ENCODE measurements at regions of chr2 and their contacts with region 1.

Region 1: GRCh38 chr2:197705121-197705911 is at the start of gene MARS2:
- DNase-seq: peak; percentile 98
- H3K4me3 Mint-ChIP-seq: peak within 1 kb of the TSS; percentile 85
- H3K27ac Mint-ChIP-seq: peak within 1 kb of the TSS; percentile 96
- H3K4me1 Mint-ChIP-seq: peaks cover 38% of the 10 kb centered on the region
- H3K27me3 Mint-ChIP-seq: peaks cover 5% of the 10 kb centered on the region
- total RNA-seq, gene MARS2: 23.1 and 23.2 TPM in 2 replicates

Region 2: DNA sequence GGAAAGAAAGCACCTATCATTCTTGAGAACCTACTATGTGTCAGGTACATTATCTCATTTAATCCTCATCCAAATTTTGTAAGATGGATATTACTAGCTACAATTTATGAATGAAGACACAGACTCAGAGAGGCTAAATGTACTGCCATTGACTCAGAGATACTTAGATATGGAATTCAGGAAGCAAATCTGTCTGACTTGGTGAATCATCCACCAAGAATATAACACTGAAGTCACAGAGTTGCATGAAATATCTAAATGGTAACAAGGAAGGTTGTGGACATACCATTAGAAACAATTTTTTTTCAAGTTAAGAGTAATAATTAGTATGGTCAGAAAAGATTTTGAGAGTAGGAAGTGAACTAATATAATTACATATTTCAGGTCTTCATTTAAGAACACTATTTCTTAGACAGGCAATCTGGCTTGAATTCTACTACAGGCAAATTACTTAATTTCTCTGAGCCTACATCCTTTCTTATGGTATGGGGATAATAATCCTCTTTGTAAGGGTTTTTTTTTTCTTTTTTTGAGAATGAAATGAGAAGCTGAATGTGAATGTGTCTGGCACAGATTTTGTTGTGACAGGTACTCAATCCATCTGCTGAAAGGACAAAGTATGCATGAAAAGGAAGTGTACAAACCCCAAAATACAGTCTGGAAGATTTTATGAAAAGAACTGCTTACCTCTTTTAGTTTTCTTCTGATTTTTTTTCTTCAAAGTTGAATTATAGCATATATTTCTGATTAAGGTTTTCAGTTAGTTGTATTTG is 881.4 kb before region 1 on chr2:
- intact Hi-C with region 1: no loop called
- DNase-seq: no peak
- H3K4me3 Mint-ChIP-seq: no peak overlapping the region
- H3K27ac Mint-ChIP-seq: no peak overlapping the region
- H3K4me1 Mint-ChIP-seq: peaks cover 12% of the 10 kb centered on the region
- H3K27me3 Mint-ChIP-seq: no peaks in the 10 kb centered on the region

Region 3: DNA sequence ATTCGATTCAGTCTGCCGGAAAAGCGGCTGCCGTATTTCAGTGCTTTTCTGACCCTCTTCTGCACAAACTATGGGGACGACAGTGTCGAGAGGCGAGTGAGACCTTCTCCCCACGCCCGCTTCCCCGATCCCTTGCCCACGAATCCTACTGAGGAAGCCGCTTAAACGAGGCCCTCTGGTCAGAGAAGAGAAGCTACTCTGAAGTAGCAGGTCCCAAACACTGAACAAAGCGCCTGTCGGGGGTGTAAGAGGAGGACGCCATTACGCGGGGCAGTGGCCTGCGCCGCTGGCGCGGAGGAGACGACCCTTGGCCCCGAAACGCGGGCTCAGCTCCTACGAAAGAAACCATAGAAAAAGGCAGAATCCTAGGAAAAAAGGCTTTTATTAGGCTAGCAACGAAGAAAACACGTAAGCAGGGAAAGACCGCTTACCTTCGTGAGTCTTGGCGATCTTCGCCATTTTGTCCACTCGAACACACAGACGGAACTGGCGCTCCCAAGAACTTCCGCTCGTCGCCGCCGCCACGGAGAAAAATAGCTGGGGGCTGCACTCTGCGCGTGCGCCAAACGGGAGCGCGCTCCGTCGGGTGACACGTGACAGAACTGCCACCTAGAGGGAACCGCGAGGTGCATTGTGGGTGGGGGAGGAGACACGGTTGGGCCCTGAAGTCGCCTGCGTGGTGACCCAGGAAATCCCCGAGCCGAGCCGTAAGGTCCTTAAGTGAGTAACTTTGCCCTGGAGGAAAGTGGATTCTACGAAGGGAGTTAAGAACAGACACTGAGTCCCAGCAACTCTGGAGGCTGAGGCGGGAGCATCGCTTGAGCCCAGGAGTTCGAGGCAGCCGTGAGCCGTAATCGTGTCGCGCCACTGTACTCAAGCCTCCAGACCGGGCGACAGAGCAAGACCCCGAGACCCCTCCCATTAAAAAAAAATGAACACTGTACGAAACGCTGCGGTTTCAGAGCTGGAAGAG is 270.5 kb before region 1 on chr2 and contains the start of gene SF3B1:
- intact Hi-C with region 1: loop called (anchors 2 kb)
- DNase-seq: peak; percentile 100
- H3K4me3 Mint-ChIP-seq: peak within 1 kb of the TSS; percentile 84
- H3K27ac Mint-ChIP-seq: peak within 1 kb of the TSS; percentile 100
- H3K4me1 Mint-ChIP-seq: peaks cover 45% of the 10 kb centered on the region
- H3K27me3 Mint-ChIP-seq: peaks cover 2% of the 10 kb centered on the region
- total RNA-seq, gene SF3B1: 259 and 278 TPM in 2 replicates

Region 4: GRCh38 chr2:197499594-197500526 is 205.5 kb before region 1 on chr2 and contains the starts of genes HSPD1 and HSPE1:
- intact Hi-C with region 1: loop called (anchors 1 kb)
- DNase-seq: peak; percentile 99
- H3K4me3 Mint-ChIP-seq: peak within 1 kb of the TSS; percentile 95
- H3K27ac Mint-ChIP-seq: peak within 1 kb of the TSS; percentile 98
- H3K4me1 Mint-ChIP-seq: peaks cover 41% of the 10 kb centered on the region
- H3K27me3 Mint-ChIP-seq: no peaks in the 10 kb centered on the region
- total RNA-seq, gene HSPD1: 984 and 999 TPM in 2 replicates
- total RNA-seq, gene HSPE1: 409 and 411 TPM in 2 replicates

Region 5: DNA sequence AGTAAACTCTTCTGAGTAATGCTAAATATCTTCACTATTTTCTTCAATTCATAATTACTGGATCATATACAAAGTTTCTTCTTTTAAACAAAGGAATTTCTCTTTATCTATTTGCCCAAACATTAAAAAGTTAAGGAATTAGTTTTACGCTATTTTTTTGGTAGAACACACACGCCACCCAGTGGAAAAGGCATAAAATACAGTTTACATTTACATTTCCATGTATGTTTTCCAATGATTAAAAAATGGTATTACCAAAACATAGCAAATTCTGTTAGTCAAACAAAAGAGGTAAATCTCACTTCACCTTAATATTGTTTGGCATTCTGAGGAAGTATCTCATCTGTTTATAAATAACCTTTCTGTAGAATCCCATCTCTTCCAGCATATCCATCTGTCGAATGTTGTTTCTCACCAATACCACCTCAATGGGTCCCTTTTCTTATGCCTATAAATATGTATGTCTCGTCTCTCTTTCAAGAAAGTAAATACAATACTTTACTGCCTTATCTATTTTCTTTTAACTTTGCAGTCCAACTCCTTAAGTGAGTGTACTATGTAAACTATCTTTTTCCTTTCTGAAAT is 72.6 kb after region 1 on chr2:
- intact Hi-C with region 1: loop called (anchors 1 kb)
- DNase-seq: peak; percentile 77
- H3K4me3 Mint-ChIP-seq: no peak overlapping the region
- H3K27ac Mint-ChIP-seq: no peak overlapping the region
- H3K4me1 Mint-ChIP-seq: no peaks in the 10 kb centered on the region
- H3K27me3 Mint-ChIP-seq: peaks cover 19% of the 10 kb centered on the region

Region 6: GRCh38 chr2:197793456-197793855 is 88.1 kb after region 1 on chr2:
- intact Hi-C with region 1: no loop called
- DNase-seq: no peak
- H3K4me3 Mint-ChIP-seq: no peak overlapping the region
- H3K27ac Mint-ChIP-seq: no peak overlapping the region
- H3K4me1 Mint-ChIP-seq: no peaks in the 10 kb centered on the region
- H3K27me3 Mint-ChIP-seq: peaks cover 39% of the 10 kb centered on the region

Region 7: GRCh38 chr2:198127627-198128026 is 422.3 kb after region 1 on chr2:
- intact Hi-C with region 1: loop called (anchors 5 kb)
- DNase-seq: peak; percentile 80
- H3K4me3 Mint-ChIP-seq: no peak overlapping the region
- H3K27ac Mint-ChIP-seq: no peak overlapping the region
- H3K4me1 Mint-ChIP-seq: peaks cover 4% of the 10 kb centered on the region
- H3K27me3 Mint-ChIP-seq: peaks cover 2% of the 10 kb centered on the region

Region 8: DNA sequence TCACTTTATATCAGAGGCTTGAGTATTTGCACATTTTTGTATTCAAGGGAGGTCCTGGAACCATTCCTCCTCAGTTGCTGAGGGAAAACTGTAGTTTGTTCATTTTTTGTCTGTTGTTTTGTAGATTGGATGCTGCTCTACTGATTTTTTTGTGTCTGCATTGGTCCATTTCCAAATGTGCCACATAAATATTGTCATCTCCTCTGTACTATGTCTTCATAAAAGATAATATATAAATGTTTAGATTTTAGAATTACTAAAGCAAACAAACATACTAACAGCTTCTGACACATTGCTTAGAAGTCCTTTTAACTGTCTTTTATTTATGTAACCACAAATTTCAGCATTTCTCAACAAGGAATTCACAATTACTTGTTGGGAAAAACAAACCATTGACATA is 455.8 kb after region 1 on chr2:
- intact Hi-C with region 1: no loop called
- DNase-seq: no peak
- H3K4me3 Mint-ChIP-seq: no peak overlapping the region
- H3K27ac Mint-ChIP-seq: no peak overlapping the region
- H3K4me1 Mint-ChIP-seq: no peaks in the 10 kb centered on the region
- H3K27me3 Mint-ChIP-seq: no peaks in the 10 kb centered on the region

Measured in activated CD4-positive, alpha-beta T cell treated with anti-CD3 and anti-CD28 coated beads, Interleukin-2, amount 10 ng/mL, durations not matched to agents 24 days and 14 days (primary cell).